Colonic mucosa (tissue), 4 donors: ENCODE measurements at regions of chr17 and their contacts with region 1.

Region 1: GRCh38 chr17:48724251-48725003 is 1.4 kb downstream of the PRAC2 start:
- DNase-seq: peak; percentile 98
- H3K4me3 ChIP-seq: peak overlapping the region; percentile 45
- H3K27ac ChIP-seq: peak overlapping the region; percentile 85
- H3K4me1 ChIP-seq: no peaks in the 10 kb centered on the region
- H3K27me3 ChIP-seq: peaks cover 45% of the 10 kb centered on the region
- CTCF ChIP-seq: peak; percentile 73

Region 2: GRCh38 chr17:48642439-48643263 is 81.8 kb before region 1 on chr17:
- intact Hi-C with region 1: loop called (anchors 5 kb)
- DNase-seq: peak; percentile 76
- H3K4me3 ChIP-seq: peak overlapping the region; percentile 50
- H3K27ac ChIP-seq: peak overlapping the region; percentile 85
- H3K4me1 ChIP-seq: no peaks in the 10 kb centered on the region
- H3K27me3 ChIP-seq: peaks cover 7% of the 10 kb centered on the region
- CTCF ChIP-seq: no peak

Region 3: GRCh38 chr17:48671697-48672171 is 52.7 kb before region 1 on chr17:
- intact Hi-C with region 1: no loop called
- DNase-seq: peak; percentile 93
- H3K4me3 ChIP-seq: no peak overlapping the region
- H3K27ac ChIP-seq: no peak overlapping the region
- H3K4me1 ChIP-seq: no peaks in the 10 kb centered on the region
- H3K27me3 ChIP-seq: no peaks in the 10 kb centered on the region
- CTCF ChIP-seq: peak; percentile 80

Region 4: GRCh38 chr17:48791128-48792032 is 67.0 kb after region 1 on chr17:
- intact Hi-C with region 1: loop called (anchors 2 kb)
- DNase-seq: peak; percentile 95
- H3K4me3 ChIP-seq: no peak overlapping the region
- H3K27ac ChIP-seq: peak overlapping the region; percentile 71
- H3K4me1 ChIP-seq: no peaks in the 10 kb centered on the region
- H3K27me3 ChIP-seq: no peaks in the 10 kb centered on the region
- CTCF ChIP-seq: peak; percentile 65

Region 5: GRCh38 chr17:48878918-48879898 is 154.8 kb after region 1 on chr17:
- intact Hi-C with region 1: loop called (anchors 5 kb)
- DNase-seq: peak; percentile 73
- H3K4me3 ChIP-seq: no peak overlapping the region
- H3K27ac ChIP-seq: no peak overlapping the region
- H3K4me1 ChIP-seq: no peaks in the 10 kb centered on the region
- H3K27me3 ChIP-seq: no peaks in the 10 kb centered on the region
- CTCF ChIP-seq: peak; percentile 92